ENCODE measurements at regions of chr2 and their contacts with region 1.

Region 1: DNA sequence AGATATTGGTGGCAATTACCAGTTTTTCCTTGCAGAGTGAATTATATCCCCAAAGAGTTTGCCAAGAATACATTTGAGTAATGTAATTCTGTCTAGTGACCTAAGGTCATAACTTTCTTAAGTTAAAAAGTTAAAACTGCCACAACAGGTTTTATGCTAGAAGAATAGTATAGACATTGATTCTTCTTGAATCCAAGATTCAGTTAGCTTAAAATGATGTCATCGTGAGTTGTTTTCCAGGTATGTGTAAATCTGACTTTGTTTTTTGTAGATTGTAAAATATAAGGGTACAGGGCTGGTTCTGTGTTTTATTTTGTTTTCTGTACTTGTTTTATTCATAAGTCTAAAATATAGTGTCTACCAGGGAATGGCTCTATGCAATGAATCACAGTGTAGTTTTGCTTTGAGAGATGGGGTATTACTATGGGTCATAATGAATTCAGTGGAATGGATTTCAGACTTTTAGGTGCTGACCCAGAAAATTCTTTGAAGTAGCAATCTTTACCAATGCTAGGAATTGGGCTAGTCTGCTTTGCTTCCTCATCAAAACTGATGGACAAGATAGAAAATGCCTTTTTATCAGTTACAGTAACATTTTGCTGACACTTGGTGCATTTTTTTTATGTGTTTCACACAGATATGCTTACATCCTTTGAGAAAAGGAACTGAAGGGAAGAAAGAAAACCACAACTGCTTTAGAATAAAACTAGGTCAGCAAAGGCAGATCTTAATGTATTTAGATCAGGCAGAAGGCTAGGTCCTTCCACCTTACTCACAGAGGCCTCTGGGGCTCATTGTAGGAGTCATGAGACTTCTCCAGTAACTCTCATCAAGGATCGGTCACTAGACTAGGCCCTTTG is 20.8 kb upstream of the MGAT5 start:
- DNase-seq: no peak
- CTCF ChIP-seq: no peak

Region 2: GRCh38 chr2:133892352-133892913 is 340.7 kb before region 1 on chr2:
- CTCF ChIA-PET with region 1: no interaction called
- POLR2A ChIA-PET with region 1: no interaction called
- DNase-seq: no peak
- CTCF ChIP-seq: no peak

Region 3: GRCh38 chr2:133953524-133953923 is 279.6 kb before region 1 on chr2:
- CTCF ChIA-PET with region 1: no interaction called
- POLR2A ChIA-PET with region 1: no interaction called
- DNase-seq: no peak
- CTCF ChIP-seq: no peak

Region 4: GRCh38 chr2:134218930-134219658 is 14.0 kb before region 1 on chr2:
- CTCF ChIA-PET with region 1: interaction called, 31 read pairs
- POLR2A ChIA-PET with region 1: no interaction called
- DNase-seq: no peak
- CTCF ChIP-seq: no peak

Region 5: GRCh38 chr2:134253804-134254203 is 20.7 kb after region 1 on chr2 and contains the start of gene MGAT5:
- CTCF ChIA-PET with region 1: interaction called, 10 read pairs
- POLR2A ChIA-PET with region 1: no interaction called
- DNase-seq: no peak
- CTCF ChIP-seq: no peak

Measured in GM10248 (cell line).